K562 (cell line): ENCODE measurements at regions of chr1 and their contacts with region 1.

Region 1: GRCh38 chr1:19651141-19651737 is 7.1 kb downstream of the NBL1 start:
- DNase-seq: peak; percentile 81 to 94 (median 84)
- ATAC-seq: peak; percentile 93
- H3K4me3 ChIP-seq: no peak overlapping the region
- H3K27ac ChIP-seq: no peak overlapping the region
- H3K4me1 ChIP-seq: peaks cover 15 to 23% of the 10 kb centered on the region in 2 experiments; a peak in 4 of 5 replicates
- H3K27me3 ChIP-seq: peaks cover 0 to 10% of the 10 kb centered on the region in 2 experiments; a peak in 2 of 5 replicates
- CTCF ChIP-seq: peak; percentile 93 to 97 (median 93)
- EP300 ChIP-seq: no peak
- POLR2A ChIP-seq: no peak
- RAD21 ChIP-seq: peak; percentile 91 to 98

Region 2: DNA sequence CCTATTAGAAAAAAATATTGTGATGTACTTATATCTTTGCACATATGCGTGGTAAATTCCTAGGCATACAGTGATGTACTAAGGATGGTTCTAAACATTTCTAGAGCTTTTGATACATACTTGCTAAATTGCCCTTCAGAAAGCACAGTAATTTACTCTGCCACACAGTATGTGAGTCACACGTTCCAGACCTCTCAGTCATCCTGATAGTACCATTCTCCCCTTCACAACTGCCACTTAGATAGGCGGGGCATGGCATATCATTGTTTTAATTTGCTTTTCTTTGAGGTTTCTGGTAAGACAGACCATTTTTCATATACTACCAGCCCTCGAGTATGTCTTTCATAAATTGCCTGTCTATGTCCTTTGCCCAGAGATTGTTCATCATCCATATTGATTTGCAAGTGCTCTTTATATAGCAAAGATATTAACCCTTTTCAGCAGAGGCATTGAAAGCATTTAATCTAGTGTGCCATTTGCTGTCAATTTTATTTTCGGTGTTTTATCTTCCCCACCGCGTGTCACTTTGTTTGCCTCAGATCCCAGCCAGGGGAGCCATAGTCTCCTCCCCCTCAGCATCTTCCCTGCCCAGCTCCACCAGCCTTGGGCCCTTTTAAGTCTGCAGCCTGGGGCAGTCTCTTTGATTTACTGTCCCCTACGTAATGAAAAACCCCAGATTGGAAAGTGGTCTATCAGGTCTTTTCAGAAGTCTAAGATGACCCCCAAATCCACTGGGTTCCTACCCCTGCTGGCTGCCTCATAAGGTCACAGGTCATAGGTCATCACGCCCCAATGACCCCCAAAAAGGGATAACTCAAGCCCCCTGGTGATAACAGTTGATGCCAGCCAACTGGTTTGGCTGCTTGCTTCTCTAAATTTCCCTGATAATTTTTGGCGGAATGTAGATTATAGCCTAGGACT is 1032.4 kb before region 1 on chr1:
- CTCF ChIA-PET with region 1: no interaction called
- POLR2A ChIA-PET with region 1: no interaction called
- in situ Hi-C with region 1: loop called (anchors 25 kb)
- intact Hi-C with region 1: no loop called
- DNase-seq: no peak
- ATAC-seq: no peak
- H3K4me3 ChIP-seq: no peak overlapping the region
- H3K27ac ChIP-seq: no peak overlapping the region
- H3K4me1 ChIP-seq: no peaks in the 10 kb centered on the region
- H3K27me3 ChIP-seq: peaks cover 10 to 29% of the 10 kb centered on the region in 2 experiments
- CTCF ChIP-seq: no peak
- EP300 ChIP-seq: no peak
- POLR2A ChIP-seq: no peak
- RAD21 ChIP-seq: no peak

Region 3: GRCh38 chr1:18902523-18903290 is 748.5 kb before region 1 on chr1 and contains the start of gene ALDH4A1:
- CTCF ChIA-PET with region 1: interaction called, 3 read pairs
- POLR2A ChIA-PET with region 1: no interaction called
- in situ Hi-C with region 1: no loop called
- intact Hi-C with region 1: loop called (anchors 10 kb)
- DNase-seq: peak; percentile 98 to 100 (median 98)
- ATAC-seq: peak; percentile 96
- H3K4me3 ChIP-seq: peak within 1 kb of the TSS; percentile 77
- H3K27ac ChIP-seq: peak within 1 kb of the TSS; percentile 92
- H3K4me1 ChIP-seq: peaks cover 30% of the 10 kb centered on the region in 2 experiments
- H3K27me3 ChIP-seq: no peaks in the 10 kb centered on the region
- CTCF ChIP-seq: no peak
- EP300 ChIP-seq: 0 out of 2 replicates have a peak, but pooled peaks have one; percentile 9
- POLR2A ChIP-seq: peak; percentile 94
- RAD21 ChIP-seq: no peak
- polyA plus RNA-seq, gene ALDH4A1: 0.27 to 0.73 TPM

Region 4: DNA sequence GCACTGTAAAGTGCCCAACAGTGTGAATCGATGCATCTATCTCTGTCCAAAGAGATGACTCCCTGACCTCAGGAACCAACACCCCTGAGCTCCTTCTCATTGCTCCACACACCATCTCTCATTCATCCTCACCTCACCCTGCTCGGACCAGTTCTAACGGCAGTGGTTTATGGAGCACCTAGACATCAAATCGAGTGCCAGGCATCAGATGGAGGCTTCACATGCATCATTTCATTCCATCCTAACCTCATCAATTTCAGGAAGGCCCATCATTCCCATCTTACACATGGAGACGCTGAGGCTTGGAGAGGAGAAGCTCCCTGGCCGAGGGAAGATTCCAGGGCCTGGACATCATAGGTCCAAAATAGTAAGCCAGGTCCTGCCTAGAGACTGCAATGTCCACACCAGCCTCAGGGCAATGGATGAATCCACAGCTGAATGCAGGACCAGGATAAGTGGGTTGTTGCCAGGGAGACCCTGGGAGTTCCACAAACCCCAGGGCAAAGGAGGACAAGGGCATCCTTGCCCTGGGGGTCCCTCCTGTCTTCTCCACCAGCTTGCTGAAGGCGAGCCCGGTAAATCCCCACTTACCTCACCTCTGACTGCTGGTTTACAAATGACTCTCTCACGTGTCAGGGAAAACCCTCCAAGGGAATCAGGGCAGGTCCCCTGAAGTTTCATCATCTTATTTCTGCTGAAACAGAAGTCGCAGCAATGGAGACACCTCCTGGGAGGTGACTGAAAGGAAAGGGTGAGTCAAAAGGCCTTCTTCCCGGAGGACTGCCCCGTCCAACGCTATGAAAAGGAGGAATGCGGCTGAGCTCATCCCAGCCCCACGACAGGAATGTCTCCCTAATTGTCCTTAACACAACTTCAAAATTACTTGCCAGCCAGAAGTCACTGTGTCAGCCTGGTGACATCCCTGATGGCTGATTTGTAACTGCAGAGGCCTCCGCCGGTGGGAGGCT is 685.7 kb before region 1 on chr1:
- CTCF ChIA-PET with region 1: no interaction called
- POLR2A ChIA-PET with region 1: no interaction called
- in situ Hi-C with region 1: no loop called
- intact Hi-C with region 1: no loop called
- DNase-seq: no peak
- ATAC-seq: no peak; the same call in 2 of the 3 replicates
- H3K4me3 ChIP-seq: no peak overlapping the region
- H3K27ac ChIP-seq: no peak overlapping the region
- H3K4me1 ChIP-seq: no peaks in the 10 kb centered on the region
- H3K27me3 ChIP-seq: peaks cover 59 to 69% of the 10 kb centered on the region in 2 experiments
- CTCF ChIP-seq: no peak
- EP300 ChIP-seq: no peak
- POLR2A ChIP-seq: no peak
- RAD21 ChIP-seq: no peak

Region 5: GRCh38 chr1:19179597-19180264 is 471.5 kb before region 1 on chr1:
- CTCF ChIA-PET with region 1: interaction called, 6 read pairs
- POLR2A ChIA-PET with region 1: no interaction called
- in situ Hi-C with region 1: loop called (anchors 10 kb)
- intact Hi-C with region 1: loop called (anchors 10 kb)
- DNase-seq: peak; percentile 51 to 83 (median 66)
- ATAC-seq: peak; percentile 92
- H3K4me3 ChIP-seq: no peak overlapping the region
- H3K27ac ChIP-seq: peak overlapping the region; percentile 73
- H3K4me1 ChIP-seq: peaks cover 5 to 23% of the 10 kb centered on the region in 2 experiments; a peak in 3 of 5 replicates
- H3K27me3 ChIP-seq: no peaks in the 10 kb centered on the region
- CTCF ChIP-seq: peak; percentile 58 to 67 (median 58)
- EP300 ChIP-seq: peak; percentile 61; the same call in 1 of the 2 replicates
- POLR2A ChIP-seq: no peak
- RAD21 ChIP-seq: peak in 1 of 2 experiments; percentile 68; a peak in 3 of 4 replicates

Region 6: GRCh38 chr1:19251305-19252196 is 399.7 kb before region 1 on chr1 and contains the starts of genes EMC1 and MRTO4:
- CTCF ChIA-PET with region 1: no interaction called
- POLR2A ChIA-PET with region 1: interaction called, 3 read pairs
- in situ Hi-C with region 1: loop called (anchors 10 kb)
- intact Hi-C with region 1: loop called (anchors 5 kb)
- DNase-seq: peak; percentile 94 to 95 (median 94)
- ATAC-seq: peak; percentile 93
- H3K4me3 ChIP-seq: peak within 1 kb of the TSS; percentile 99
- H3K27ac ChIP-seq: peak within 1 kb of the TSS; percentile 99
- H3K4me1 ChIP-seq: peaks cover 14 to 21% of the 10 kb centered on the region in 2 experiments; a peak in 4 of 5 replicates
- H3K27me3 ChIP-seq: no peaks in the 10 kb centered on the region
- CTCF ChIP-seq: no peak
- EP300 ChIP-seq: no peak; the same call in 1 of the 2 replicates
- POLR2A ChIP-seq: peak; percentile 97
- RAD21 ChIP-seq: no peak
- polyA plus RNA-seq, gene EMC1: 32.1 to 69.3 TPM
- polyA plus RNA-seq, gene MRTO4: 62.0 to 146 TPM

Region 7: GRCh38 chr1:19390901-19391595 is 260.2 kb before region 1 on chr1:
- CTCF ChIA-PET with region 1: interaction called, 15 read pairs
- POLR2A ChIA-PET with region 1: interaction called, 3 read pairs
- in situ Hi-C with region 1: no loop called
- intact Hi-C with region 1: loop called (anchors 1 kb)
- DNase-seq: peak; percentile 60 to 77 (median 68)
- ATAC-seq: peak; percentile 84
- H3K4me3 ChIP-seq: no peak overlapping the region; the same call in 1 of the 2 replicates
- H3K27ac ChIP-seq: peak overlapping the region; percentile 69
- H3K4me1 ChIP-seq: peaks cover 22 to 31% of the 10 kb centered on the region in 2 experiments
- H3K27me3 ChIP-seq: no peaks in the 10 kb centered on the region
- CTCF ChIP-seq: peak; percentile 83 to 96 (median 95)
- EP300 ChIP-seq: peak; percentile 61
- POLR2A ChIP-seq: no peak
- RAD21 ChIP-seq: peak; percentile 79 to 85